Activated T-helper 1 cell treated with anti-CD3 and anti-CD28 coated beads, Interleukin-12 subunit alpha, Interleukin-12 subunit beta, Interleukin-2, Interleukin-4 antibody, amounts not matched to agents 30 ng/mL and 10 ng/mL and 1 ng/mL, durations not matched to agents 14 hours and 24 hours and 36 hours (primary cell): ENCODE measurements at regions of chr5 and their contacts with region 1.

Region 1: GRCh38 chr5:16465544-16466466 is at the start of gene ZNF622:
- DNase-seq: peak; percentile 86
- H3K4me3 Mint-ChIP-seq: peak within 1 kb of the TSS; percentile 99
- H3K27ac Mint-ChIP-seq: peak within 1 kb of the TSS; percentile 95
- H3K4me1 Mint-ChIP-seq: peaks cover 66% of the 10 kb centered on the region
- H3K27me3 Mint-ChIP-seq: no peaks in the 10 kb centered on the region
- total RNA-seq, gene ZNF622: 54.4 and 55.6 TPM in 2 replicates

Region 2: GRCh38 chr5:16453609-16454008 is 12.2 kb before region 1 on chr5:
- intact Hi-C with region 1: no loop called
- DNase-seq: no peak
- H3K4me3 Mint-ChIP-seq: no peak overlapping the region
- H3K27ac Mint-ChIP-seq: no peak overlapping the region
- H3K4me1 Mint-ChIP-seq: peaks cover 34% of the 10 kb centered on the region
- H3K27me3 Mint-ChIP-seq: no peaks in the 10 kb centered on the region

Region 3: DNA sequence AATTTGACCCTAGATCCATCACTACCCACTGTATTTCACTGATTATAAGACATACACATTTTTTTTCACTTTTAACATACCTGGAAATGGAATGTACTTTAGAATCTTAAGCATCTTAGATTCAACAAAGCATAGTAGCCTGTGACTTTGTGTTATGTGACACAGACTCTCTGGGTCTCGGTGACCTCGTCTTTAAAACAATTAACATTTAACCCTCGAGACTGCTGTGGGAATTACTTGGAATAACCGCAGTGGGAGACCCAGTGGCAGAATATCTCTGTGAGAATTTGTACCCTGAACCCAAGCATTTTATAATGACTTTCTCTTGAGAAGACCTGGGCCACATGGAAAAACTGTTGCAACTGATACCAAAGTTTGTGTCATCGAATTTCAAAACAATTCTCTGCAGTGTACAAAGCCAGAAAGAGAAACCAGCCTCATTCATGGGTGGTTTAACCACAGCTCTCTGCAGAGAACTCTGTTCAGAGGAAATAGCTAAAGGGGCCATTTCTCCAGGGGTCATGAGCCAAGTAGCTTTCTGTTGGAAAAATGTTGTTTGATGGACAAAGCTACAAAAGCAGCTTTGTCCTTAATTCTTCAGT is 161.0 kb after region 1 on chr5:
- intact Hi-C with region 1: loop called (anchors 1 kb)
- DNase-seq: peak; percentile 43
- H3K4me3 Mint-ChIP-seq: peak overlapping the region; percentile 28
- H3K27ac Mint-ChIP-seq: peak overlapping the region; percentile 45
- H3K4me1 Mint-ChIP-seq: peaks cover 43% of the 10 kb centered on the region
- H3K27me3 Mint-ChIP-seq: no peaks in the 10 kb centered on the region

Region 4: GRCh38 chr5:16690243-16690852 is 224.5 kb after region 1 on chr5:
- intact Hi-C with region 1: no loop called
- DNase-seq: no peak
- H3K4me3 Mint-ChIP-seq: no peak overlapping the region
- H3K27ac Mint-ChIP-seq: no peak overlapping the region
- H3K4me1 Mint-ChIP-seq: no peaks in the 10 kb centered on the region
- H3K27me3 Mint-ChIP-seq: peaks cover 6% of the 10 kb centered on the region

Region 5: GRCh38 chr5:16934123-16934522 is 468.3 kb after region 1 on chr5:
- intact Hi-C with region 1: loop called (anchors 5 kb)
- DNase-seq: no peak
- H3K4me3 Mint-ChIP-seq: peak overlapping the region; percentile 58
- H3K27ac Mint-ChIP-seq: no peak overlapping the region
- H3K4me1 Mint-ChIP-seq: peaks cover 25% of the 10 kb centered on the region
- H3K27me3 Mint-ChIP-seq: peaks cover 55% of the 10 kb centered on the region

Region 6: GRCh38 chr5:17477043-17477442 is 1011.2 kb after region 1 on chr5:
- intact Hi-C with region 1: no loop called
- DNase-seq: no peak
- H3K4me3 Mint-ChIP-seq: no peak overlapping the region
- H3K27ac Mint-ChIP-seq: no peak overlapping the region
- H3K4me1 Mint-ChIP-seq: no peaks in the 10 kb centered on the region
- H3K27me3 Mint-ChIP-seq: no peaks in the 10 kb centered on the region